ENCODE measurements at regions of chr3 and their contacts with region 1.

Region 1: DNA sequence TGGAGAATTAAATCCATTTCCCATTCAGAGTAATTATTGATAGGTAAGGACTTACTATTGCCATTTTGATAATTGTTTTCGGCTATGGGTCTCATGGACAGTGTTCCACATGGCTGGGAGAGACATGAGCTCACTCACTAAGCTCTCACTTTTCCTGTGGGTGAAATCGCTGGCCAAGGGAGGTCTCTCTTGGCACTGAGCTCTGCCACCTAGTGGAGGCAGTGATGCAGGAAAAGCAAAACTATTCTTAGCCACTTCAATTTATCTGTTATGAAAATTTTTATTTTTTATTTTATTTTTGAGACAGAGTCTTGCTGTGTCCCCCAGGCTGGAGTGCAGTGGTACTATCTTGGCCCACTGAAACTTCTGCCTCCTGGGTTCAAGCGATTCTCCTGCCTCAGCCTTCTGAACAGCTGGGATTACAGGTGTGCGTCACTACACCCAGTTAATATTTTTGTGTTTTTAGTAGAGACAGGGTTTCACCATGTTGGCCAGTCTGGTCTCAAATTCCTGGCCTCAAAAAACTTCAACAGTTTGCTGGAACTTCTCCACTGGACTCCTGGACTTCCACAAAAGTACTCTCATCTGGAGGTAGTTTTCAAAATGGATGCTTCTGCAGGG is 4.7 kb upstream of the RNF13 start:
- DNase-seq: peak; percentile 64
- ATAC-seq: no peak
- H3K4me3 Mint-ChIP-seq: no peak overlapping the region
- H3K27ac Mint-ChIP-seq: no peak overlapping the region
- H3K4me1 Mint-ChIP-seq: peaks cover 10% of the 10 kb centered on the region
- H3K27me3 Mint-ChIP-seq: peaks cover 26% of the 10 kb centered on the region

Region 2: DNA sequence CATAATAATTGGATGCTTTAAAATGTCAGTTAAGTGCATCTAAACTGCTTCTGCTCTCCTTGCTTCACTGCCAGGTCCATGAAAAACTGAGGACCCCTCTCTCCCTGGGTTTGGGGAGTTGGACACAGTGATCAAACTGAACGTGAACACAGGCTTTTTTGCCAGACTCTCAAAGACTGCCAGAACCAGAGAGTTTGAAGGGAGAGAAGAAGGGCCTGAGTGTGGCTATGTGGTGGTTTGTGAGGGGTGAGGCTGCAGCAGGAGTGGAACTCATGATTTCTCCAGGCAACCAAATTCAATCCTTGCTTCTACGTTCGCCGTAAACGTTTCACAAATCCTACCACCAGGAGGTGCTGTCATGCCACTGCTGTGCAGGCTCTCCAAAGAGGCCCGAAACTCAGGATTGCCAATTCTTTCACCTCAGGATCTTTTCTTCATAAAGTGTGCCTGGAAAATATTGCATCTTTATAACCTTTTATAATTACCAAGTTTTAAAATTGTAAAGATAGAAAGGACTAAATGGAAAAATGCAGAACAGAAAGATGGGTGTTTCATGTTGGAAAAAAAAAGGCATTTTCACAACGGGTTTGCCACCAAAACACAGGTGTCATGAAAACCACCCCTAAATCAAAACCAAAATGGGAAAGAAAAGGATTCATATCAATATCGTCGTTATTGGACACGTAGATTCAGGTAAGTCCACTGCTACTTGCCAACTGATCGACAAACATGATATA is 314.1 kb before region 1 on chr3:
- CTCF ChIA-PET with region 1: interaction called, 12 read pairs
- POLR2A ChIA-PET with region 1: no interaction called
- DNase-seq: peak; percentile 51
- ATAC-seq: no peak
- H3K4me3 Mint-ChIP-seq: no peak overlapping the region
- H3K27ac Mint-ChIP-seq: no peak overlapping the region
- H3K4me1 Mint-ChIP-seq: no peaks in the 10 kb centered on the region
- H3K27me3 Mint-ChIP-seq: peaks cover 4% of the 10 kb centered on the region

Region 3: DNA sequence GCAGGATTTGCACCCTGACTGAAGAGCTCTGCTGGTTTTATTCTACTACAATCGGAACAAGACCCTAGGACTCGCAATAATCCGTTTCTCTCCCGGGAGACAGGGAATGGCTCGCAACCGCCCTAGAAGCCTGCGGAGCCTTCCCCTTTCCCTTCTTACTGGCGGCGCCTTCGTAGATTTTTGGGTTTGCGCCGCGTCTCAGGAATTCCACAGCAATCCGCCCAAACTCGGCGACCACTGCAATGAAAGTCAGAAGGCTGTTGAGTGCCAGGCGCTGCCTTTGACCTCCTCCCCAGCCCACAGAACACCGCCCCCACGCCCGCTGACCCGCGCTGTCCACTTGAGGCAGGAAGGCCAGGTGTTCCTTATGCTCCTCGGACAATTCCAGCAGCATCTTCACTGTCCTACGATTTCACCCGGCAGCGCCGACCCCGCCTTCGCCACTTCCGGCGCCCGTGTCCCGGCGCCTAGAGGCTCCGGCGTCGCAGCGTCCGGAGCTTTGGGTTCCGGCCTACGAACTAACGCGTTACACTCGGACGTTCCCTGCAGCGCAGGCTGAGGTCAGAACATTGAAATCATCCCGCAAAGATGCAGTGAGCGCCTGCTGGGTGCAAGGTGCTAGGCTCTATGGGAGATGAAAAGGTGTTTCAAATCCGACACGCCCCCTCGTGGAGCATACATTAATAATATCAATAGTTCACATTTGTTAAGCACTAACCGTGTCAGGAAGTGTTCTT is 56.1 kb before region 1 on chr3 and contains the start of gene COMMD2:
- CTCF ChIA-PET with region 1: interaction called, 20 read pairs
- POLR2A ChIA-PET with region 1: interaction called, 3 read pairs
- DNase-seq: peak; percentile 86
- ATAC-seq: peak; percentile 99
- H3K4me3 Mint-ChIP-seq: peak within 1 kb of the TSS; percentile 95
- H3K27ac Mint-ChIP-seq: peak within 1 kb of the TSS; percentile 93
- H3K4me1 Mint-ChIP-seq: peaks cover 17% of the 10 kb centered on the region
- H3K27me3 Mint-ChIP-seq: no peaks in the 10 kb centered on the region
- total RNA-seq, gene COMMD2: 32.3 to 35.1 TPM

Region 4: GRCh38 chr3:149765762-149766334 is 42.5 kb before region 1 on chr3:
- CTCF ChIA-PET with region 1: interaction called, 33 read pairs
- POLR2A ChIA-PET with region 1: no interaction called
- DNase-seq: no peak
- ATAC-seq: no peak
- H3K4me3 Mint-ChIP-seq: no peak overlapping the region
- H3K27ac Mint-ChIP-seq: no peak overlapping the region
- H3K4me1 Mint-ChIP-seq: no peaks in the 10 kb centered on the region
- H3K27me3 Mint-ChIP-seq: peaks cover 18% of the 10 kb centered on the region

Region 5: DNA sequence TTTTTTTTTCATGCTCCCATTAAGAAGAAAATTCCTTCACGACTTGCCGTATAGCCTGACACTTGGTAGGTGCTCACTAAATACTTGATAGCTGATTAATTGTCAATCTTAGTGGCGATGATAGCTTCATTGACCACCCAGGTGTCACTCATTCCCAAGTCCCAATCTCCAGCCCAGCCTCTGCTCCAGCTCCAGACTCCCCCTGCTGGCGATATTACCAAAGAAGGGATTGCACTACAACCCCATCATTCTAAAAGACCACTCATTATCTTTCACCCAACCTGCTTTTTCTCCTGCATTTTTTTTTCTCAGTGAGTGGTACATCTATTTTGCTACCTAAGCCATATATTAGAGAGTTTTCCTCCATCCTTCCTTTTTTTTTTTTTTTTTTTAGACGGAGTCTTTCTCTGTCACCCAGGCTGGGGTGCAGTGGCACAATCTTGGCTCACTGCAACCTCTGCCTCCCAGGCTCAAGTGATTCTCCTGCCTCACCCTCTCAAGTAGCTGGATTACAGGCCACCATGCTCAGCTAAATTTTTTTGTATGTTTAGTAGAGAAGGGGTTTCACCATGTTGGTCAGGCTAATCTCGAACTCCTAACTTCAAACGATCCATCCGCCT is 36.6 kb before region 1 on chr3:
- CTCF ChIA-PET with region 1: interaction called, 33 read pairs
- POLR2A ChIA-PET with region 1: no interaction called
- DNase-seq: peak; percentile 60
- ATAC-seq: peak; percentile 65
- H3K4me3 Mint-ChIP-seq: no peak overlapping the region
- H3K27ac Mint-ChIP-seq: no peak overlapping the region
- H3K4me1 Mint-ChIP-seq: no peaks in the 10 kb centered on the region
- H3K27me3 Mint-ChIP-seq: peaks cover 22% of the 10 kb centered on the region

Region 6: DNA sequence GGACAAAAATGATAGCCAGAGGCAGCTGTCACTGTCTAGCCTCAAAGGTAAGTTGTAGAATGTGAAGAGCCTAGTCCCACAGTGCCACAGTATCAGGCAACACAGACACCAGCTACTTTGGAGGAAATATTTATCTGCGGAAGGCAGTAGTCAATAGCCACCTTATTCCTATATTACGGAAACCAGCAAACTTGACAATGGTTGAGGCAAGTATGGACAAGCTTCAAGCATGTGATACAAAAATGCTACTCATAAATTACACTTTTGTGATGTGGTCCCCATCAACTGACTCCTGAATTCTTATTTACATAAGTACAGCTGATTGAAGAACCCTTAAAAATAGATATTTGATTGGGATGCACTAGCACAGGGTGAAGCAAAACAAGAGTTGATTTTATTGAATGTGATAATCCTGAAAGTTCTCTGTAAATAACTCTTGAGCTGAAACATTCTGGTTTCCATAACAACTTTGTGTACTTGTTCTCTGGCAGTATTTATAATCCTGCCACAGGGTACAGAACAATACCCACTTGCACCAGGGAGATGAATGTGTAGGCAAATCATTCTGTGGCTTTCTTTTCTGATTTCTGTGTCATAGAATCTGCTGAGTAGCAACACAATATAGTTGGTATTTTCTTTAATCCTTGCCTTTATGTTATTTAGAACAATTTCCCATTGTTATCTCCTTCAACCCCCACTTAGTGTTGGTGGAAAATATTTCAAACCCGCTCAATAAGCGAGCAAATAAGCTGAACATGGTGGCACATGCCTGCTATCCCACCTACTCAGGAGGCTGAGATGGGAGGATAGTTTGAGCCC is 15.7 kb before region 1 on chr3 and contains the start of gene ANKUB1:
- CTCF ChIA-PET with region 1: interaction called, 14 read pairs
- POLR2A ChIA-PET with region 1: no interaction called
- DNase-seq: no peak
- ATAC-seq: no peak
- H3K4me3 Mint-ChIP-seq: no peak within 1 kb of the TSS
- H3K27ac Mint-ChIP-seq: no peak within 1 kb of the TSS
- H3K4me1 Mint-ChIP-seq: no peaks in the 10 kb centered on the region
- H3K27me3 Mint-ChIP-seq: peaks cover 11% of the 10 kb centered on the region
- total RNA-seq, gene ANKUB1: not detected

Measured in activated CD8-positive, alpha-beta T cell treated with anti-CD3 and anti-CD28 coated beads, Interleukin-2, amount 10 ng/mL, durations not matched to agents 7 days and 5 days (primary cell).